Activated B cell treated with CpG ODN at 0.5 μM for 24 hours (primary cell): ENCODE measurements at regions of chr7 and their contacts with region 1.

Region 1: GRCh38 chr7:143008007-143008901 is 18.7 kb downstream of the OR9A2 start:
- DNase-seq: peak; percentile 81
- ATAC-seq: peak; percentile 97
- H3K4me3 Mint-ChIP-seq: no peak overlapping the region
- H3K27ac Mint-ChIP-seq: no peak overlapping the region
- H3K4me1 Mint-ChIP-seq: peaks cover 50% of the 10 kb centered on the region
- H3K27me3 Mint-ChIP-seq: peaks cover 1% of the 10 kb centered on the region
- CTCF ChIP-seq: peak; percentile 98

Region 2: DNA sequence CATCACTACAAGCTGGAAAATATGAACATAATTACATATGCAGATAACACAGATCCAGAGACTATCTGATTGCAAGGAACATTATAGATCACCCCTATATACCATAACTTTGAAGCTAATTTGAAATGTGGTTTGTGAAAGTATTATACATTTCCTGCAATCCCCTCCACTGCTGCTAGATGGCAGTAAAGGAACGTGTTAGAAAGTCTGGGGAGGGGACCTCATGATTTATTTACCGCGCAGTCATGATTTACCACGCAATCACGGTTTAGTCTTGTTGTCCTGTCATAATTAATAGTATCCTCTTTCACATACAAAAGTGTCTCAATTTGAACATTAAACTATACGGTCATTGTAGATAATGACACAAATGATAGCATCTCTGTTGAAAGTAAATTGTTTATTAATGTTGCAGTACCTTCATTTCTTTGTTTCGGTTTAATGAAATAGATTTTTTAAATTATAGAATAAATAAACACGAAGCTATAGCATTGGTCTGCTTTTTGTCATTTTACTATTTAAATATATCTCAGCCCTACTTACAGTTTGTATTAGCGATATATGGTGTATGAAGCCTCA is 404.3 kb before region 1 on chr7:
- CTCF ChIA-PET with region 1: interaction called, 70 read pairs
- POLR2A ChIA-PET with region 1: no interaction called
- intact Hi-C with region 1: loop called (anchors 1 kb)
- DNase-seq: no peak
- ATAC-seq: no peak
- H3K4me3 Mint-ChIP-seq: no peak overlapping the region
- H3K27ac Mint-ChIP-seq: no peak overlapping the region
- H3K4me1 Mint-ChIP-seq: peaks cover 3% of the 10 kb centered on the region
- H3K27me3 Mint-ChIP-seq: peaks cover 35% of the 10 kb centered on the region
- CTCF ChIP-seq: peak; percentile 64

Region 3: GRCh38 chr7:142632291-142633134 is 375.7 kb before region 1 on chr7:
- CTCF ChIA-PET with region 1: interaction called, 85 read pairs
- POLR2A ChIA-PET with region 1: interaction called, 7 read pairs
- intact Hi-C with region 1: loop called (anchors 1 kb)
- DNase-seq: peak; percentile 44
- ATAC-seq: peak; percentile 97
- H3K4me3 Mint-ChIP-seq: no peak overlapping the region
- H3K27ac Mint-ChIP-seq: no peak overlapping the region
- H3K4me1 Mint-ChIP-seq: peaks cover 2% of the 10 kb centered on the region
- H3K27me3 Mint-ChIP-seq: peaks cover 16% of the 10 kb centered on the region
- CTCF ChIP-seq: peak; percentile 89

Region 4: GRCh38 chr7:142853739-142854371 is 154.4 kb before region 1 on chr7:
- CTCF ChIA-PET with region 1: interaction called, 44 read pairs
- POLR2A ChIA-PET with region 1: interaction called, 3 read pairs
- intact Hi-C with region 1: loop called (anchors 1 kb)
- DNase-seq: peak; percentile 76
- ATAC-seq: peak; percentile 88
- H3K4me3 Mint-ChIP-seq: peak overlapping the region; percentile 97
- H3K27ac Mint-ChIP-seq: peak overlapping the region; percentile 95
- H3K4me1 Mint-ChIP-seq: peaks cover 27% of the 10 kb centered on the region
- H3K27me3 Mint-ChIP-seq: no peaks in the 10 kb centered on the region
- CTCF ChIP-seq: peak; percentile 61

Region 5: GRCh38 chr7:142908921-142909890 is 99.0 kb before region 1 on chr7:
- CTCF ChIA-PET with region 1: interaction called, 5 read pairs
- POLR2A ChIA-PET with region 1: no interaction called
- intact Hi-C with region 1: loop called (anchors 2 kb)
- DNase-seq: no peak
- ATAC-seq: no peak
- H3K4me3 Mint-ChIP-seq: no peak overlapping the region
- H3K27ac Mint-ChIP-seq: no peak overlapping the region
- H3K4me1 Mint-ChIP-seq: no peaks in the 10 kb centered on the region
- H3K27me3 Mint-ChIP-seq: peaks cover 24% of the 10 kb centered on the region
- CTCF ChIP-seq: no peak

Region 6: GRCh38 chr7:143104832-143105241 is 96.6 kb after region 1 on chr7:
- CTCF ChIA-PET with region 1: no interaction called
- POLR2A ChIA-PET with region 1: no interaction called
- intact Hi-C with region 1: no loop called
- DNase-seq: no peak
- ATAC-seq: no peak
- H3K4me3 Mint-ChIP-seq: no peak overlapping the region
- H3K27ac Mint-ChIP-seq: no peak overlapping the region
- H3K4me1 Mint-ChIP-seq: no peaks in the 10 kb centered on the region
- H3K27me3 Mint-ChIP-seq: no peaks in the 10 kb centered on the region
- CTCF ChIP-seq: no peak

Region 7: DNA sequence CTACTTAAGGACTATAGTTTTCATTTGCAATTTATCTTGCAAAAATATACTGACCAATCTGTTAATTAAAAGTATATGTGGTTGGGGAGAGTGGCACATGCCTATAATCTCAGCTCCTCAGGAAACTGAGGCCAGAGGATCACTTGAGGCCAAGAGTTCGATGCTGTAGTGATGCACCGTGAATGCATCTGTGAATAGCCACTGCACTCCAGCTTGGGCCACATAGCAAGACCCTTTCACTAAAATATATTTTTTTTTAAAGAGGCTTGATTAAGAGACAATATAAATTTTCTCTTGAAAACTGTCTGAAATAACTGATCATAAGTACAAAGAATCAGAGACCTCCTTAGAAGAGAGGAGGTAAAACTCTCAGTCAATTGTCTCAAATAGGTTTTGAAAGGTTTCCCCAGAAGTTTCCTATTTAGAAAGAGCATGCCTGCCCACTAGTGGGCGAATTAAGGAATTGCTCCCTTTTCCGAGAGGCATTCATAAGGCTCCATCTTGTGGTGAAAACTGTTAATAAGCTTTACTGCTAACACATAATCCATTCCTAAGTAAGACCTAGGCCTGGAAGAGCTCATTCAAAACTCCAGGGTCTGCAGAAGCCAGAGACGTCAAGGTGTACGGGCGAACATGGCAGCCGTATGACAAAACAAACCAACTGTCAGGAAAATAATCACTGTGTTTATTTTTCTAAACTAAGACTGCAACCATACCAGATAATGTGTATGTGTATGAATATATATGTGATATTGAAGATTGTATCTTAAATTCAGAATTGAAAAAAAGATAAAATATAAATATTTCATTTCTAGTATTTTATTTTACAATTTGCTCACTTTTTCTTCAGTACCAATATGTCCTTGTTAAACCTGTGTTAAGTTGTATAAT is 206.8 kb after region 1 on chr7:
- CTCF ChIA-PET with region 1: interaction called, 519 read pairs
- POLR2A ChIA-PET with region 1: interaction called, 10 read pairs
- intact Hi-C with region 1: loop called (anchors 1 kb)
- DNase-seq: no peak
- ATAC-seq: peak; percentile 97
- H3K4me3 Mint-ChIP-seq: no peak overlapping the region
- H3K27ac Mint-ChIP-seq: no peak overlapping the region
- H3K4me1 Mint-ChIP-seq: peaks cover 16% of the 10 kb centered on the region
- H3K27me3 Mint-ChIP-seq: peaks cover 2% of the 10 kb centered on the region
- CTCF ChIP-seq: peak; percentile 99